B cell (primary cell): ENCODE measurements at regions of chr12 and their contacts with region 1.

Region 1: GRCh38 chr12:49232940-49233841 is 31.7 kb upstream of the TUBA1C start:
- DNase-seq: no peak
- ATAC-seq: no peak
- H3K4me3 ChIP-seq: peak overlapping the region; percentile 46 to 72 (median 64)
- H3K4me3 Mint-ChIP-seq: peak overlapping the region; percentile 96
- H3K27ac ChIP-seq: peak overlapping the region; percentile 56 to 73
- H3K27ac Mint-ChIP-seq: peak overlapping the region; percentile 90
- H3K4me1 ChIP-seq: peaks cover 5 to 17% of the 10 kb centered on the region in 2 donors
- H3K4me1 Mint-ChIP-seq: peaks cover 17% of the 10 kb centered on the region
- H3K27me3 ChIP-seq: no peaks in the 10 kb centered on the region
- H3K27me3 Mint-ChIP-seq: no peaks in the 10 kb centered on the region
- CTCF ChIP-seq: no peak

Region 2: DNA sequence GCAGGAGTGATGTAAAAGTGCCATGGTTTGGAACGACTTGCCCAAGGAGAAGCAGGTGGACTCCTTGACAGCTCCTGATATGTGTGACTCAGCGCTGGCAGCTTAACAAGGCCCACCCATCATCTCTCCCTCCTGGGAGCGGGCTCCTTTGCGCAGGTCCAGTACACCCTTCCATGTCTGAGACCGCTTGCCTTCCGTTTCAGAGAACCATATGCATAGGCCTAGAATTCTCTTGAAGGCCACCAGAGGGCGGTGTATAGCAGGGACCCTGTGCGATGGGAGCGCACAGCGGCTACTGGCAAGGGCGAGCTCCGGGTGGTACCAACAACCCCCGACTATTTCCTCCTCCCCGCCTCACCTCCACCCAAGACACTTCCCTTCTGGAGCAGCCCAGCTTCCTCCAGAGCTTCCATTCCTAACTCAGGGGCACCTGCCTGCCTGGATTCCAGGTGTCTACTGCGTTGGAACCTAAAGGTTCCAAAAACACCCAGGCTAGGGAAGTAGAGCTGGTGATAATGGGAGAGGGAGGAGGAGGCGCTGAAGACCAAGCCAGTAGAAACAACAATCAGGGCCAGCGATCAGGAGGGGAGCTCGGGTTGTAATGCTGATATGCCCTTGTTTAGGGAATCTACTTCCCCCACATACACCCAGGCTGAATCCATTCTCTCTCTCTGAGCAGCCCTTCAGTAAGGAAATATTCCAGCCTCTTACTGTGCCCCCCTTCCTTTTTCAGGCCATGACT is 144.8 kb before region 1 on chr12:
- CTCF ChIA-PET with region 1: interaction called, 152 read pairs
- POLR2A ChIA-PET with region 1: interaction called, 6 read pairs
- intact Hi-C with region 1: loop called (anchors 1 kb)
- DNase-seq: peak; percentile 88
- ATAC-seq: peak; percentile 92
- H3K4me3 ChIP-seq: peak overlapping the region in 1 of 5 experiments; percentile 10
- H3K4me3 Mint-ChIP-seq: peak overlapping the region; percentile 70
- H3K27ac ChIP-seq: no peak overlapping the region
- H3K27ac Mint-ChIP-seq: no peak overlapping the region
- H3K4me1 ChIP-seq: peaks cover 47 to 48% of the 10 kb centered on the region in 2 donors
- H3K4me1 Mint-ChIP-seq: peaks cover 38% of the 10 kb centered on the region
- H3K27me3 ChIP-seq: peaks cover 0 to 57% (median 37%) of the 10 kb centered on the region in 4 experiments
- H3K27me3 Mint-ChIP-seq: peaks cover 46% of the 10 kb centered on the region
- CTCF ChIP-seq: peak; percentile 96

Region 3: GRCh38 chr12:49110464-49111155 is 122.6 kb before region 1 on chr12 and contains the start of gene LMBR1L:
- CTCF ChIA-PET with region 1: interaction called, 10 read pairs
- POLR2A ChIA-PET with region 1: no interaction called
- intact Hi-C with region 1: loop called (anchors 1 kb)
- DNase-seq: peak; percentile 99
- ATAC-seq: peak; percentile 93
- H3K4me3 ChIP-seq: peak within 1 kb of the TSS; percentile 61 to 99 (median 86)
- H3K4me3 Mint-ChIP-seq: peak within 1 kb of the TSS; percentile 96
- H3K27ac ChIP-seq: peak within 1 kb of the TSS; percentile 88 to 90
- H3K27ac Mint-ChIP-seq: peak within 1 kb of the TSS; percentile 96
- H3K4me1 ChIP-seq: peaks cover 16 to 23% of the 10 kb centered on the region in 2 donors
- H3K4me1 Mint-ChIP-seq: peaks cover 44% of the 10 kb centered on the region
- H3K27me3 ChIP-seq: no peaks in the 10 kb centered on the region
- H3K27me3 Mint-ChIP-seq: no peaks in the 10 kb centered on the region
- CTCF ChIP-seq: peak; percentile 66
- total RNA-seq, gene LMBR1L: 182 and 187 TPM in 2 replicates

Region 4: GRCh38 chr12:49200919-49201594 is 32.1 kb before region 1 on chr12:
- CTCF ChIA-PET with region 1: interaction called, 9 read pairs
- POLR2A ChIA-PET with region 1: no interaction called
- intact Hi-C with region 1: loop called (anchors 2 kb)
- DNase-seq: peak; percentile 85
- ATAC-seq: peak; percentile 93
- H3K4me3 ChIP-seq: no peak overlapping the region
- H3K4me3 Mint-ChIP-seq: peak overlapping the region; percentile 15
- H3K27ac ChIP-seq: peak overlapping the region in 1 of 2 donors; percentile 44
- H3K27ac Mint-ChIP-seq: peak overlapping the region; percentile 23
- H3K4me1 ChIP-seq: peaks cover 10 to 12% of the 10 kb centered on the region in 2 donors
- H3K4me1 Mint-ChIP-seq: peaks cover 13% of the 10 kb centered on the region
- H3K27me3 ChIP-seq: no peaks in the 10 kb centered on the region
- H3K27me3 Mint-ChIP-seq: peaks cover 7% of the 10 kb centered on the region
- CTCF ChIP-seq: no peak

Region 5: GRCh38 chr12:49413796-49414195 is 180.6 kb after region 1 on chr12:
- CTCF ChIA-PET with region 1: no interaction called
- POLR2A ChIA-PET with region 1: no interaction called
- intact Hi-C with region 1: no loop called
- DNase-seq: no peak
- ATAC-seq: no peak
- H3K4me3 ChIP-seq: no peak overlapping the region
- H3K4me3 Mint-ChIP-seq: no peak overlapping the region
- H3K27ac ChIP-seq: no peak overlapping the region
- H3K27ac Mint-ChIP-seq: no peak overlapping the region
- H3K4me1 ChIP-seq: no peaks in the 10 kb centered on the region
- H3K4me1 Mint-ChIP-seq: peaks cover 8% of the 10 kb centered on the region
- H3K27me3 ChIP-seq: no peaks in the 10 kb centered on the region
- H3K27me3 Mint-ChIP-seq: no peaks in the 10 kb centered on the region
- CTCF ChIP-seq: no peak